ENCODE measurements at regions of chr3 and their contacts with region 1.

Region 1: DNA sequence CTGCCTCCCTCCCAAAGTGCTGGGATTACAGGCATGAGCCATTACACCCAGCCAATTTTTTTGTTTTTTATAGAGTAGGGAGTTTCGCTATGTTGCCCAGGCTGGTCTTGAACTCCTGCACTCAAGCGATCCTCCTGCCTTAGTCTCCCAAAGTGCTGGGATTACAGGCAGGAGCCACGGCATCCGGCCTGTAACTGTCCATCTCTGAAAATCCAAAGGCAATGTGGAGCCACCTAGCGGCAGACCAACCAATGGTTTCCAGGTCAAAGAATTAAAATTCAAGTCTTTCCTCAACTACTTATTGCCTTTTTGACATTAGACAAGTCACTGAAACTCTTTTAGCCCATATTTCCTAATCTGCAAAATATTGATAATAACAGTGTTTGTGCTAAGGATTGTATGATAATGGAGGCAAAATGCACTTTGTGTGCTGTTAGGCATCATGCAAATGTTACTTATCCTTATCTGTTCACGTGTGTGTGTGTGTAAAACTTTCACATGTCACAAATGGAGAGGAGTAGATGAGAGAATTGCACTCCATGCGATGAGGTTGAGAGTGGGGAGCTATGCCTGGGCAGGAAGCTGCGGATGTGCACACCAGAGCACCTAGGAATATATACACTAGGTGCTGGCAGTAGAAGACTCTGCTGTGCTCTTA is 48.7 kb downstream of the COL8A1 start:
- DNase-seq: no peak
- H3K4me3 ChIP-seq: no peak overlapping the region
- H3K27ac ChIP-seq: no peak overlapping the region
- H3K4me1 ChIP-seq: no peaks in the 10 kb centered on the region
- H3K27me3 ChIP-seq: peaks cover 0 to 4% (median 0%) of the 10 kb centered on the region in 7 donors
- CTCF ChIP-seq: peak in 7 of 11 experiments; percentile 44 to 59 (median 55)
- POLR2A ChIP-seq: no peak

Region 2: DNA sequence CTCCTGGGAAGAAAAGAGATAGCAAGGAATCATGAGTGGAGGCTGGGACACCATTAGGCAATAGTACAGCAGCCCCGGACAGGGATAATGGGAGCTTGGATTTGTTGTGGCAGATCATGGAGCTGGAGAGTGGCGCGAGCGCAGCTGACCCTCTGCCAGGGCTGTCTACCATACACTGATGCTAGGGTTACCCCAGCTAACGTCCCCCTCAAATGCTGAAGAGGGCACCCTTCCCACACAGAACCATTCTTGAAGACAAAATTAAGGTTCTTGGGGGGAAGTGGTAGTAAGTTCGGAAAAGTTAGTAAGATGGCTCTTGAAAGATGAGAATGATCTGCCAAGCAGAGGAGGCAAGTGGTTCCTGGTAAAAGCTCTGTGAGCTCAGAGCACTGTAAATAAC is 862.8 kb before region 1 on chr3:
- intact Hi-C with region 1: loop called (anchors 10 kb)
- DNase-seq: no peak
- H3K4me3 ChIP-seq: no peak overlapping the region
- H3K27ac ChIP-seq: no peak overlapping the region
- H3K4me1 ChIP-seq: no peaks in the 10 kb centered on the region
- H3K27me3 ChIP-seq: no peaks in the 10 kb centered on the region
- CTCF ChIP-seq: no peak
- POLR2A ChIP-seq: no peak

Region 3: GRCh38 chr3:99366663-99367429 is 320.2 kb before region 1 on chr3:
- intact Hi-C with region 1: no loop called
- DNase-seq: no peak
- H3K4me3 ChIP-seq: no peak overlapping the region
- H3K27ac ChIP-seq: no peak overlapping the region
- H3K4me1 ChIP-seq: no peaks in the 10 kb centered on the region
- H3K27me3 ChIP-seq: no peaks in the 10 kb centered on the region
- CTCF ChIP-seq: no peak
- POLR2A ChIP-seq: no peak

Region 4: GRCh38 chr3:99499235-99500158 is 187.6 kb before region 1 on chr3:
- intact Hi-C with region 1: loop called (anchors 5 kb)
- DNase-seq: no peak
- H3K4me3 ChIP-seq: no peak overlapping the region
- H3K27ac ChIP-seq: no peak overlapping the region
- H3K4me1 ChIP-seq: peaks cover 0 to 17% (median 0%) of the 10 kb centered on the region in 6 donors
- H3K27me3 ChIP-seq: no peaks in the 10 kb centered on the region
- CTCF ChIP-seq: peak in 9 of 11 experiments; percentile 26 to 66 (median 48)
- POLR2A ChIP-seq: no peak